ENCODE measurements at regions of chr12 and their contacts with region 1.

Region 1: DNA sequence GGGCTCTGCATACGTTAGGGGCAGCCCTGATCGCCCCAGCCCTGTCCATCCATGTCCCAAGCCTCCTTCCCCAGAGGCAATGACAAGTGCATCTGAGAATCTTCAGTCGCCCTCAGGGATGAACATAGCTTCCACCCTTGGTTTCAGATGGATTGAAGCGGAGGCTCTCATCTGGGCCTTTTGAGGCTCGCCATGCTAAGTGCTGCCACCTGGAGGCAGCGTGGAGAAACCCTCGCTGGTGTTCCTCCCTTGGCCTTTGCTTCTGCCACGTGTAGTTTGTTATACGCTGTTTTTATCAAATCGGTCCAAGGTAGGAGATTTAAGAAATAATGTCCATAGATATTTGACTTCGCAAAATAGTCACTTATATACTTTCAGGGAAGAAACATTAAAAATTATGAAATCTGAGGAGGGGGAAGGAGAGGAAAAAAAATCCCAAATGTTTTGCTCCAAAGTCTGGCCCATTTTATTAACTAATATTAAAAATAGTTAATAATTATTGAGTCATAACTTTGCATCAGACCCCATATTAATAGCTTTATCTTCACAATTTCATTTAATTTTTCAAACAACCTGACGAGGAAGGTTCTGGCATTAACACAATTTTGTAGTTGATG is 28.8 kb upstream of the LRRC10 start:
- DNase-seq: peak; percentile 87

Region 2: DNA sequence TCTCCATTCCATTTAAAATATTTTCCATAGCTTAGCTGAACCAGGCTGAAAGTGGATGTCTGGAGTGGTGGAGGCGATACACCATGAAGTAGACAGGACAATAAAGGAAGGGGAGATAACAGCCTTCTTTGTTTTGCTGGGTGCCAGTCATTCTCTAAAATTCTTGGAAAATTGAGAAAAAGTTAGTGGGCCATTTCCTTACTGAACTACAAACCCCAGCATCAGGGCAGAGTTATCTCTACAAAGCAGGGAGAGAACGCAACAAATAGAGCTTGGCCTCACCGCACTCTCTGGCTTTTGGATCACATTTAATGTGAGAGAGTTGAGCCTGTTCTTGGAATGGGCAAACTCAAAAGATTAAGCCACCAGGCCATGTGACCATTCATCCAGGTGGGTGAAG is 12.4 kb after region 1 on chr12:
- CTCF ChIA-PET with region 1: interaction called, 12 read pairs
- POLR2A ChIA-PET with region 1: no interaction called
- DNase-seq: no peak